G401 (cell line): ENCODE measurements at regions of chr6 and their contacts with region 1.

Region 1: DNA sequence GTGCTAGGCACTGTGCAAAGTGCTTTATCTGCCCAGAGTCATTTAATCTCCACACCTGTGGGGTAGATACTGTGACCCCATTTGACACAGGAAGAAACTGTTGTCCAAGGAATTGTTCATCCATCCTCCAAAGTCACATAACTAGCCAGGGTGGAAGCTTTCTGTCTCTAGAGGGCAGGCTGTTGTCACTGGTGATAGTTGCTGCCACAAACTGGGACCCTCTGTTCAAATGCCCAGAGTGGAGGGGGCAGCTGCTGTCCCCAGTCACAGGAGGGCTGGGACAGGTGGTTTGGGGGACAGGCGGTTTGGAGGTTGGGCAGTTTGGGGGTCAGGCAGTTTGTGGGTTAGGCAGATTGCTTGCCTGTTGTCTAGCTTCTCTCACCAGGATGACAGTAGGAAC is 16.1 kb upstream of the TMEM242 start:
- DNase-seq: no peak

Region 2: DNA sequence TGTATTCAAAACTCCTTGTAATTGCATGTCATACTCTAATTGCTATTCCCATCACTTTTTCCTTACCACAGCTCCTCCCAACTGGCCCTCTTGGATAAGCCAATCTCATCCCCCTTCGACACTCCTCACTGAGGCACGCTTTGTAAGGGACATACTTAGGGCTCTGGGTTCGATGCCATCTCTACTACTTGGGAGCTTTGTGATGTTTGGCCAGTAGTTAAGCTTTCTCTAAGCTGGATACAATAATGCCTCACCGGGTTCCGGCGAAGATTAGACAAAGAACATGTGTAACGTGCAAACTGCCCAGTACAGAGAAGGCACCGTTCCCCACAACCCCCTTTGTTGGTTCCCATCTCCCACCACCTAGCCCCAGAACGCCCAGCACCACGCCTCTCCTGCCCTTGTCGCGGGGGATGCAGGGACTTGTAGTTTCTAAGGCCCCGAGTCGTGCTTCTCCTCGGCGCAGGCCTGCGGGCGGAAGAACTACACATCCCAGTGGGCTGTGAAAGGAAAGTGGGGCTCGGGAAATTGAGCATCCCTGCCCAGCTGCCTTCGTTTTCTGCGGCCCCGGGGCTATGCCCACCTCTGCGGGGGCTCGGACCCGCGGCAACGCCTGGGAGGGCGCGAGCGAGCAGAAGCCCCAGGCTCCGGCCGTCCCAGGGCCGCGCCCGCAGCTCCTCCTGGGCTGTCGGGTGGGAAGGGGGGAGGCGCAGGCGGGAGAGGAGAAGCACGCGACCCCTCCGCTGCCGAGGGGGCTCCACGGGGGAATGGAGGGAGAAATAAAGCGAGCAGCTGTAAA is 40.4 kb after region 1 on chr6:
- in situ Hi-C with region 1: loop called (anchors 5 kb)
- DNase-seq: peak; percentile 95